ENCODE measurements at regions of chr9 and their contacts with region 1.

Region 1: GRCh38 chr9:92634712-92635605 is 35.0 kb downstream of the IPPK start:
- DNase-seq: peak; percentile 90
- H3K4me3 Mint-ChIP-seq: no peak overlapping the region
- H3K27ac Mint-ChIP-seq: no peak overlapping the region
- H3K4me1 Mint-ChIP-seq: peaks cover 8% of the 10 kb centered on the region
- H3K27me3 Mint-ChIP-seq: no peaks in the 10 kb centered on the region

Region 2: GRCh38 chr9:92140074-92140753 is 494.7 kb before region 1 on chr9:
- intact Hi-C with region 1: loop called (anchors 2 kb)
- DNase-seq: peak; percentile 93
- H3K4me3 Mint-ChIP-seq: peak overlapping the region; percentile 70
- H3K27ac Mint-ChIP-seq: no peak overlapping the region
- H3K4me1 Mint-ChIP-seq: peaks cover 10% of the 10 kb centered on the region
- H3K27me3 Mint-ChIP-seq: peaks cover 35% of the 10 kb centered on the region

Measured in activated CD4-positive, alpha-beta T cell treated with anti-CD3 and anti-CD28 coated beads, Interleukin-2, amount 10 ng/mL, durations not matched to agents 24 days and 14 days (primary cell).